ENCODE measurements at regions of chr10 and their contacts with region 1.

Region 1: DNA sequence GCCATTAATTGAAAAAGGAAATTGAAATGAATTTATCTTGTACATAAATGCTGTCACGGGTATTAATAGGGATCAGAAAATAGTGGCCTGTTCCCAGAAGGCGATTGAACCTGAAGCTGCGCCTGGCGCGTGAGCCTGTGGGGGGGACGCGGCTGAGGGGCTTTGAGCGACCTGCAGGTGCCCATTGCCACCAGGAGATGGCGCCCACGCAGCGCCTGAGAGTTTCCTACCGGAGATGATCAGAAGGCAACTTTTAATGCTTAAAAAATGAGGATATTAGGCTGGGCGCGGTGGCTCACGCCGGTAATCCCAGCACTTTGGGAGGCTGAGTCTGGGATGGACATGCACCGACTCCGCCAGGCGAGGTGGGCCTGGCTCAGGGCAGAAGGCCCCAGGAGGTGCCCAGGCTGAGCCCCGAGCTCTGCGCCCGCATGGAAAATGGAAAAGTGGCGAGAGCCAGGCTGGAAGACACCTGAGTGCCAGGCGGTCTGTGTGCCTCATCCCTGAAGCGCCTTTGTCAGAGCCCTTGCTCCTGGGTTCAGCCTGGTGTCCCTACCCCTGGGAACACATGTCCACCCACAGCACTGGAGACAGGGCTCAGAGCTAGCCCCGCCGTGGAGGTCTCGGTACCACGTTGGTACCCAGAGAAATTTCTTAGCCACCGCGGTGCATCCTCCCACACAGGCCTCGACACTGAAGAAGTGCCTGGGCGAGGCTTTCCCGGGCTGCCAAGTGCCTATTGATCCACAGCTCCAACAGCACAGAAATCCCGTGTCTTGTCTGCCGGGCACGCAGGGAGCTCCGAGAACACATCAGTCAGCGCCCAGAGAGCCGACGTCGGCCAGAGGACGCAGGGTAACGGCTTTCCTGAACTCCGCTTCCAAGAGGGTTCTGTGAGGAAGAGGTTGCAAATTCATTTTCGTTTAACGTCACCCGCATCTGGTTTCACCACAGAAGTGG is 117.4 kb downstream of the INPP5A start:
- DNase-seq: peak; percentile 60 to 86
- ATAC-seq: peak; percentile 63 to 90
- H3K4me3 ChIP-seq: no peak overlapping the region
- H3K27ac ChIP-seq: no peak overlapping the region
- H3K4me1 ChIP-seq: no peaks in the 10 kb centered on the region
- CTCF ChIP-seq: peak; percentile 94
- EP300 ChIP-seq: no peak
- POLR2A ChIP-seq: no peak
- RAD21 ChIP-seq: peak; percentile 94 to 97

Region 2: GRCh38 chr10:132643709-132644526 is 11.1 kb before region 1 on chr10:
- CTCF ChIA-PET with region 1: interaction called, 23 read pairs
- POLR2A ChIA-PET with region 1: no interaction called
- DNase-seq: no peak
- ATAC-seq: peak in 1 of 2 experiments; percentile 66; a peak in 3 of 6 replicates
- H3K4me3 ChIP-seq: no peak overlapping the region
- H3K27ac ChIP-seq: no peak overlapping the region
- H3K4me1 ChIP-seq: no peaks in the 10 kb centered on the region
- CTCF ChIP-seq: no peak
- EP300 ChIP-seq: no peak
- POLR2A ChIP-seq: no peak
- RAD21 ChIP-seq: no peak

Region 3: GRCh38 chr10:132677473-132678227 is 22.7 kb after region 1 on chr10:
- CTCF ChIA-PET with region 1: interaction called, 13 read pairs
- POLR2A ChIA-PET with region 1: no interaction called
- DNase-seq: no peak
- ATAC-seq: no peak
- H3K4me3 ChIP-seq: no peak overlapping the region
- H3K27ac ChIP-seq: no peak overlapping the region
- H3K4me1 ChIP-seq: no peaks in the 10 kb centered on the region
- CTCF ChIP-seq: no peak
- EP300 ChIP-seq: no peak
- POLR2A ChIP-seq: no peak
- RAD21 ChIP-seq: no peak

Region 4: GRCh38 chr10:132696728-132697577 is 42.0 kb after region 1 on chr10:
- CTCF ChIA-PET with region 1: interaction called, 12 read pairs
- POLR2A ChIA-PET with region 1: no interaction called
- DNase-seq: no peak
- ATAC-seq: no peak
- H3K4me3 ChIP-seq: no peak overlapping the region
- H3K27ac ChIP-seq: no peak overlapping the region
- H3K4me1 ChIP-seq: no peaks in the 10 kb centered on the region
- CTCF ChIP-seq: no peak
- EP300 ChIP-seq: no peak
- POLR2A ChIP-seq: no peak
- RAD21 ChIP-seq: no peak

Region 5: DNA sequence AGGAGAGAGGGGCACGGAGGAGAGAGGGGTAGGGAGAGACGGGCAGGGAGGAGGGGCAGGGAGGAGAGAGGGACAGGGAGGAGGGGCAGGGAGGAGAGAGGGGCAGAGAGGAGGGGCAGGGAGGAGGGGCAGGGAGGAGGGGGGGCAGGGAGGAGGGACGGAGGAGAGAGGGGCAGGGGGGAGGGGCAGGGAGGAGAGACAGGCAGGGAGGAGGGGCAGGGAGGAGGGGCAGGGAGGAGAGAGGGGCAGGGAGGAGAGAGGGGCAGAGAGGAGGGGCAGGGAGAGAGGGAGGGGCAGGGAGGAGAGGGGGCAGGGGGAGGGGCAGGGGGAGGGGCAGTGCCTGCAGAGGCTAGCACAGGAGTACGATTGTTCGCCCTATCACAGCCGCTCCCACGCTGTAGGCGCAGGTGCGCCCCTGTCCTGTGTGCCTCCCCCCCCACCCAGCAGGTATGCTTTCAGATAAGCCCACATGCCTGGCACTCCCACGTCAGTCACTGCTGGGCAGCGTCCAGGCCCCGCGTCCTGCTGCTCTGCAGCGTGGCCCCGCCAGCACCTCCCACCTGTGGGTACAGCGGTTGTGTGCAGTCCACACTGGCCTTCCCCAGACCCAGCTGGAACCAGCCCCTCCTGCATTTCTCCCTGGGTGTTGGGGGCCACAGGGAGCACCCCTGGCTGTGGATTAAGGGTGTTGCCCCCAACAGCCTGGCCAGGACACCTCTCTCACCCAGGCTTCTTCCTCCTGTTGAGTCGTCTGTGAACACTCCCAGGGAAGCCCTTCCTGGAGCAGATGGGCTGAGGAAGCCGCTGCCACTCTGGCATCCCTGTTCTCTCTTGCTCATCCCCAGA is 120.1 kb after region 1 on chr10:
- CTCF ChIA-PET with region 1: interaction called, 17 read pairs
- POLR2A ChIA-PET with region 1: no interaction called
- DNase-seq: peak in 1 of 2 experiments; percentile 90
- ATAC-seq: peak; percentile 74 to 80
- H3K4me3 ChIP-seq: no peak overlapping the region
- H3K27ac ChIP-seq: peak overlapping the region; percentile 55 to 81; a peak in 5 of 6 replicates
- H3K4me1 ChIP-seq: peaks cover 14% of the 10 kb centered on the region
- CTCF ChIP-seq: no peak
- EP300 ChIP-seq: no peak
- POLR2A ChIP-seq: no peak
- RAD21 ChIP-seq: no peak

Region 6: GRCh38 chr10:132793871-132794849 is 139.2 kb after region 1 on chr10:
- CTCF ChIA-PET with region 1: interaction called, 56 read pairs
- POLR2A ChIA-PET with region 1: no interaction called
- DNase-seq: peak in 1 of 2 experiments; percentile 36
- ATAC-seq: peak; percentile 32 to 74; a peak in 4 of 6 replicates
- H3K4me3 ChIP-seq: no peak overlapping the region
- H3K27ac ChIP-seq: peak overlapping the region in 1 of 2 experiments; percentile 29; a peak in 2 of 6 replicates
- H3K4me1 ChIP-seq: peaks cover 5% of the 10 kb centered on the region; the same call in 1 of the 3 replicates
- CTCF ChIP-seq: peak; percentile 35; the same call in 2 of the 3 replicates
- EP300 ChIP-seq: no peak
- POLR2A ChIP-seq: no peak
- RAD21 ChIP-seq: peak in 1 of 2 experiments; percentile 26; a peak in 1 of 5 replicates

Region 7: GRCh38 chr10:133056651-133057178 is 401.7 kb after region 1 on chr10:
- CTCF ChIA-PET with region 1: no interaction called
- POLR2A ChIA-PET with region 1: no interaction called
- DNase-seq: no peak
- ATAC-seq: peak; percentile 41 to 58; a peak in 4 of 6 replicates
- H3K4me3 ChIP-seq: no peak overlapping the region
- H3K27ac ChIP-seq: no peak overlapping the region
- H3K4me1 ChIP-seq: no peaks in the 10 kb centered on the region
- CTCF ChIP-seq: no peak
- EP300 ChIP-seq: no peak
- POLR2A ChIP-seq: no peak
- RAD21 ChIP-seq: no peak

Region 8: DNA sequence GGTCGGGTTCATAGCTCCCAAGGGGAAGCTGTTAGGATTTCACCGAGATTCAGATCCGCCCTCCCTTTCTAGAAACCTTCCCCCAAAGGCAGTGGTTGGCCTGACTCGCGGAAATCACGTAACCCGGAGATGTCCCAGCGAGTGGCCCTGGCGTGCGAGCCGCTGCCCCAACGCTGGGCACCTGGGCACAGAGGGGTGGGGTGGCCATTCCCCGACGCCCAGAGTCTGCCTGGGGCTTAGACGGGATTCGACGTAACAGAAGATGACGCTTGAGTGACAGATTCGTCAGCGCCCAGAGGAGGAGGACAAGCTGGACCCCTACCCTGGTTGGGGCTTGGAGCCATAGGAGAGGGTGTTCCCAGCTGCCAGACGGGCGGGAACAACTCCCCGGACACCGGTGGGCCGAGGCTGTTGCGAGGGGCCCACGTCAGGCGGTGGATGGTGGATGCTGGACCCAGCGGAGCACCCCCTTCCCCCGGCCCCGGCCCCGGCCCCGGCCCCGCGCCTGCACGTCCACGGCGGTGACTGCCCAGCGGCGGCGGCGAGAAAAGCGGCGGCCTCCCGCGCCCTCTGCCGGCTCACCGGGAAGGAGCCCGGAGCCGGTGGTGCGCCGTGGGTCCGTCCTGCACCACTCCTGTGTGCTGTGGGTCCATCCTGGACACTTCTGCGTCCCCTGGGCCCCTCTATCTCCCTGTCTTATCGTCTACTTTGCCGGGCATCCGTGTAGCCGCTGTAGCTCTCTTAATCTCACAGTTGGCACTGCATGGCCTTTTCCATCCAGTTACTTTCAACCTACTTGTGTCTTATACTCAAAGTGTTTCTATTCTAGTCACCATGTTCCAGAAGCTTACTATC is 469.6 kb after region 1 on chr10:
- CTCF ChIA-PET with region 1: interaction called, 30 read pairs
- POLR2A ChIA-PET with region 1: no interaction called
- DNase-seq: peak; percentile 47 to 81
- ATAC-seq: peak; percentile 78 to 91
- H3K4me3 ChIP-seq: no peak overlapping the region
- H3K27ac ChIP-seq: no peak overlapping the region
- H3K4me1 ChIP-seq: no peaks in the 10 kb centered on the region
- CTCF ChIP-seq: peak; percentile 79
- EP300 ChIP-seq: no peak
- POLR2A ChIP-seq: no peak
- RAD21 ChIP-seq: peak; percentile 76 to 88